ENCODE measurements at regions of chr2 and their contacts with region 1.

Region 1: DNA sequence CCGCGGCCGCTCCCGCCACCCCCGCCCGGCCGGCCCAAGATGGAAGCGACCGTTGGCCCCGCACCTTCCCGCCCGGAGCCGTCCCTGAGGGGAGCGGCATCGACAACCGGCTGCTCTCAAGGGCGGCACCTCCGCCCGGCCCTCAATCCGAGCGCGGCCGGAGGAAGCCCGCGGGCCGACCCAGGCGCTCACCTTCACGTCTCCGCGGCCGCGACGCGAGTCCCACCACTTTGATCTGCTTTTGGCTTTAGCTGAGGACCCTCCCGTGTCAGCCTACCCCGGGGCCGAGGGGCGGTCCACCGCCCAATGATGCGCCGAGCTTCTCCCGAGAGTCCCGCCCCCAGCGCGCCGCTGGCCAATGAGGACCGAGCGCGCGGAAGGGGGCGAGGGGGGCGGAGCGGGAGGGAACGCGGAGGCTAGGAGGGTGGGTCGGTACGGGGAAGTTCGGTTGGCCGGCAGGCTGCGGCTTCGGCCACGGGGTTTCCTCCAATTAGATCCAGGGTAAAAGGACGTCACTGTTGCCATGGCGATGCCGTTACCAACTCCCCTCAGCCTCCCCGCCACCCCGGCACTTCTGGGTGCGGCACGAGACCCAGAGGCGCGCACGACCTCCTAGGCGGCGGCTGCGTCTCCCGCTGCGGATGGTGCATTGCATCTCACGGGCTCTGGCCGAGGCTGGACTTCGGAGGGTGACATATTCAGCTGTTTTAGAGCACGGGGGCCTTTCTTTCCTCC is at the start of gene YWHAQ:
- DNase-seq: peak; percentile 92 to 98 (median 96)
- ATAC-seq: peak; percentile 95
- H3K4me3 ChIP-seq: peak within 1 kb of the TSS; percentile 75
- H3K4me3 Mint-ChIP-seq: peak within 1 kb of the TSS; percentile 90 to 99 (median 96)
- H3K27ac ChIP-seq: peak within 1 kb of the TSS; percentile 94
- H3K27ac Mint-ChIP-seq: peak within 1 kb of the TSS; percentile 78 to 97 (median 94)
- H3K4me1 ChIP-seq: peaks cover 13 to 22% of the 10 kb centered on the region in 2 donors
- H3K4me1 Mint-ChIP-seq: peaks cover 39 to 52% (median 51%) of the 10 kb centered on the region in 7 donors
- H3K27me3 ChIP-seq: no peaks in the 10 kb centered on the region
- H3K27me3 Mint-ChIP-seq: peaks cover 0 to 15% (median 0%) of the 10 kb centered on the region in 5 donors
- total RNA-seq, gene YWHAQ: 67.3 to 189 (median 83.3) TPM

Region 2: GRCh38 chr2:9474361-9474967 is 156.5 kb before region 1 on chr2 and contains the start of gene IAH1:
- CTCF ChIA-PET with region 1: no interaction called
- POLR2A ChIA-PET with region 1: interaction called, 4 read pairs
- intact Hi-C with region 1: loop called (anchors 1 kb)
- DNase-seq: peak in 8 of 9 donors; percentile 66 to 81 (median 78)
- ATAC-seq: peak; percentile 89
- H3K4me3 ChIP-seq: peak within 1 kb of the TSS; percentile 82
- H3K4me3 Mint-ChIP-seq: peak within 1 kb of the TSS; percentile 81 to 89 (median 84)
- H3K27ac ChIP-seq: peak within 1 kb of the TSS; percentile 95
- H3K27ac Mint-ChIP-seq: peak within 1 kb of the TSS; percentile 83 to 95 (median 88)
- H3K4me1 ChIP-seq: peaks cover 11 to 21% of the 10 kb centered on the region in 2 donors
- H3K4me1 Mint-ChIP-seq: peaks cover 20 to 53% (median 45%) of the 10 kb centered on the region in 7 donors
- H3K27me3 ChIP-seq: no peaks in the 10 kb centered on the region
- H3K27me3 Mint-ChIP-seq: no peaks in the 10 kb centered on the region
- total RNA-seq, gene IAH1: 43.9 to 62.7 (median 49.7) TPM

Region 3: DNA sequence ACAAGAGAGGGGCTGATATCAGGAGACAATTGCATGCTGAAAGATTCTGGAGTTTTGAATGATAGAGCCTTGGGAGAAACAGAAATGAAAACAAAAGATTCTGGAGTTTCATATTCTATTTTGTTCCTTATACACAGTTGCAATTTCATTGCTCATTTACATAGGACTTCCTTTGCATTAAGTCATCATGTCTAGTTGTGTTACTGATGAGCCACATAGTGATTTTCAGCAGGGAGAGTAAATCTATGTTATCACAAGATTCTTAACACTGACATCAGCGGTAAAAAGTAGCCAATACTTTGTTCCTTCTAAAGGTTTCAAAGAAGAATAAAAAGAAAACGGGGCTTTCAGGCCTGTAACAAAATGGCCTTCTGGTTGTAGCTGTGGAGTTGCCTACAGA is 82.4 kb before region 1 on chr2:
- CTCF ChIA-PET with region 1: no interaction called
- POLR2A ChIA-PET with region 1: no interaction called
- intact Hi-C with region 1: no loop called
- DNase-seq: no peak
- ATAC-seq: peak; percentile 72
- H3K4me3 ChIP-seq: no peak overlapping the region
- H3K4me3 Mint-ChIP-seq: peak overlapping the region in 9 of 10 donors; percentile 22 to 61 (median 40)
- H3K27ac ChIP-seq: no peak overlapping the region
- H3K27ac Mint-ChIP-seq: peak overlapping the region in 5 of 9 donors; percentile 33 to 82 (median 59)
- H3K4me1 ChIP-seq: peaks cover 16 to 23% of the 10 kb centered on the region in 2 donors
- H3K4me1 Mint-ChIP-seq: peaks cover 58 to 83% (median 70%) of the 10 kb centered on the region in 7 donors
- H3K27me3 ChIP-seq: no peaks in the 10 kb centered on the region
- H3K27me3 Mint-ChIP-seq: no peaks in the 10 kb centered on the region

Region 4: DNA sequence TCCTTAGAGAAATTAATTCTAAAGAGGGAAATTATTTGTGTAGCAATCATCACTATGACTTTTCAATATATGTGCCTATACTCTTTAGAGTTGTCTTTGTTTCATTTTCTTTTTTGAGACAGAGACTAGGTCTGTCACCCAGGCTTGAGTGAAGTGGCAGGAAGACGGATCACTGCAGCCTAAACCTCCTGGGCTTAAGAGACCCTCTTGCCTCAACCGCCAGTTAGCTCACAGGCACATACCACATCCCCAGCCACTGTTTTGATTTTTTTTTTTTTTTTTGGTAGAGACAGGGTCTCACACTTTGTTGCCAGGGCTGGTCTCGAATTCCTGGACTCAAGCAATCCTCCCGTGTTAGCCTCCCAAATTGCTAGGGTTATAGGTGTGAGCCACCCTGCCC is 12.5 kb before region 1 on chr2:
- CTCF ChIA-PET with region 1: no interaction called
- POLR2A ChIA-PET with region 1: interaction called, 16 read pairs
- intact Hi-C with region 1: loop called (anchors 1 kb)
- DNase-seq: peak in 7 of 9 donors; percentile 13 to 46 (median 25)
- ATAC-seq: peak; percentile 81
- H3K4me3 ChIP-seq: no peak overlapping the region
- H3K4me3 Mint-ChIP-seq: peak overlapping the region; percentile 51 to 87 (median 78)
- H3K27ac ChIP-seq: peak overlapping the region; percentile 43
- H3K27ac Mint-ChIP-seq: peak overlapping the region; percentile 49 to 97 (median 83)
- H3K4me1 ChIP-seq: peaks cover 10 to 30% of the 10 kb centered on the region in 2 donors
- H3K4me1 Mint-ChIP-seq: peaks cover 42 to 98% (median 90%) of the 10 kb centered on the region in 7 donors
- H3K27me3 ChIP-seq: no peaks in the 10 kb centered on the region
- H3K27me3 Mint-ChIP-seq: no peaks in the 10 kb centered on the region

Region 5: GRCh38 chr2:9753276-9753600 is 122.3 kb after region 1 on chr2:
- CTCF ChIA-PET with region 1: no interaction called
- POLR2A ChIA-PET with region 1: no interaction called
- intact Hi-C with region 1: loop called in 1 of 2 experiments (anchors 2 kb)
- DNase-seq: no peak
- ATAC-seq: peak; percentile 81
- H3K4me3 ChIP-seq: peak overlapping the region; percentile 34
- H3K4me3 Mint-ChIP-seq: peak overlapping the region in 7 of 10 donors; percentile 42 to 92 (median 65)
- H3K27ac ChIP-seq: no peak overlapping the region
- H3K27ac Mint-ChIP-seq: peak overlapping the region in 6 of 9 donors; percentile 9 to 98 (median 62)
- H3K4me1 ChIP-seq: peaks cover 24 to 28% of the 10 kb centered on the region in 2 donors
- H3K4me1 Mint-ChIP-seq: peaks cover 17 to 57% (median 32%) of the 10 kb centered on the region in 7 donors
- H3K27me3 ChIP-seq: no peaks in the 10 kb centered on the region
- H3K27me3 Mint-ChIP-seq: peaks cover 16 to 36% (median 20%) of the 10 kb centered on the region in 5 donors

Region 6: GRCh38 chr2:9951272-9951972 is 320.5 kb after region 1 on chr2 and contains the start of gene GRHL1:
- CTCF ChIA-PET with region 1: no interaction called
- POLR2A ChIA-PET with region 1: no interaction called
- intact Hi-C with region 1: loop called in 1 of 2 experiments (anchors 1 kb)
- DNase-seq: peak; percentile 82 to 95 (median 90)
- ATAC-seq: peak; percentile 97
- H3K4me3 ChIP-seq: peak within 1 kb of the TSS; percentile 57
- H3K4me3 Mint-ChIP-seq: peak within 1 kb of the TSS; percentile 70 to 90 (median 86)
- H3K27ac ChIP-seq: peak within 1 kb of the TSS; percentile 63
- H3K27ac Mint-ChIP-seq: peak within 1 kb of the TSS in 7 of 9 donors; percentile 15 to 77 (median 56)
- H3K4me1 ChIP-seq: no peaks in the 10 kb centered on the region
- H3K4me1 Mint-ChIP-seq: peaks cover 0 to 13% (median 8%) of the 10 kb centered on the region in 7 donors
- H3K27me3 ChIP-seq: no peaks in the 10 kb centered on the region
- H3K27me3 Mint-ChIP-seq: peaks cover 19 to 77% (median 39%) of the 10 kb centered on the region in 5 donors
- total RNA-seq, gene GRHL1: 0.19 to 1.3 (median 0.56) TPM

Region 7: GRCh38 chr2:10448208-10448645 is 817.3 kb after region 1 on chr2 and contains the start of gene ODC1:
- CTCF ChIA-PET with region 1: no interaction called
- POLR2A ChIA-PET with region 1: no interaction called
- intact Hi-C with region 1: loop called (anchors 2 kb)
- DNase-seq: peak; percentile 96 to 99 (median 97)
- ATAC-seq: peak; percentile 92
- H3K4me3 ChIP-seq: peak within 1 kb of the TSS; percentile 91
- H3K4me3 Mint-ChIP-seq: peak within 1 kb of the TSS; percentile 81 to 95 (median 86)
- H3K27ac ChIP-seq: peak within 1 kb of the TSS; percentile 88
- H3K27ac Mint-ChIP-seq: peak within 1 kb of the TSS; percentile 76 to 94 (median 89)
- H3K4me1 ChIP-seq: peaks cover 12 to 26% of the 10 kb centered on the region in 2 donors
- H3K4me1 Mint-ChIP-seq: peaks cover 7 to 47% (median 24%) of the 10 kb centered on the region in 7 donors
- H3K27me3 ChIP-seq: no peaks in the 10 kb centered on the region
- H3K27me3 Mint-ChIP-seq: no peaks in the 10 kb centered on the region
- total RNA-seq, gene ODC1: 32.7 to 88.2 (median 52.4) TPM